B cell (primary cell): ENCODE measurements at regions of chr16 and their contacts with region 1.

Region 1: GRCh38 chr16:88569985-88570690 is at the start of gene ZC3H18:
- DNase-seq: peak; percentile 99
- ATAC-seq: peak; percentile 93
- H3K4me3 ChIP-seq: peak within 1 kb of the TSS; percentile 55 to 76 (median 73)
- H3K4me3 Mint-ChIP-seq: peak within 1 kb of the TSS; percentile 90
- H3K27ac ChIP-seq: peak within 1 kb of the TSS; percentile 52 to 87
- H3K27ac Mint-ChIP-seq: peak within 1 kb of the TSS; percentile 91
- H3K4me1 ChIP-seq: peaks cover 17 to 18% of the 10 kb centered on the region in 2 donors
- H3K4me1 Mint-ChIP-seq: peaks cover 25% of the 10 kb centered on the region
- H3K27me3 ChIP-seq: no peaks in the 10 kb centered on the region
- H3K27me3 Mint-ChIP-seq: no peaks in the 10 kb centered on the region
- CTCF ChIP-seq: no peak
- total RNA-seq, gene ZC3H18: 74.2 and 84.1 TPM in 2 replicates

Region 2: DNA sequence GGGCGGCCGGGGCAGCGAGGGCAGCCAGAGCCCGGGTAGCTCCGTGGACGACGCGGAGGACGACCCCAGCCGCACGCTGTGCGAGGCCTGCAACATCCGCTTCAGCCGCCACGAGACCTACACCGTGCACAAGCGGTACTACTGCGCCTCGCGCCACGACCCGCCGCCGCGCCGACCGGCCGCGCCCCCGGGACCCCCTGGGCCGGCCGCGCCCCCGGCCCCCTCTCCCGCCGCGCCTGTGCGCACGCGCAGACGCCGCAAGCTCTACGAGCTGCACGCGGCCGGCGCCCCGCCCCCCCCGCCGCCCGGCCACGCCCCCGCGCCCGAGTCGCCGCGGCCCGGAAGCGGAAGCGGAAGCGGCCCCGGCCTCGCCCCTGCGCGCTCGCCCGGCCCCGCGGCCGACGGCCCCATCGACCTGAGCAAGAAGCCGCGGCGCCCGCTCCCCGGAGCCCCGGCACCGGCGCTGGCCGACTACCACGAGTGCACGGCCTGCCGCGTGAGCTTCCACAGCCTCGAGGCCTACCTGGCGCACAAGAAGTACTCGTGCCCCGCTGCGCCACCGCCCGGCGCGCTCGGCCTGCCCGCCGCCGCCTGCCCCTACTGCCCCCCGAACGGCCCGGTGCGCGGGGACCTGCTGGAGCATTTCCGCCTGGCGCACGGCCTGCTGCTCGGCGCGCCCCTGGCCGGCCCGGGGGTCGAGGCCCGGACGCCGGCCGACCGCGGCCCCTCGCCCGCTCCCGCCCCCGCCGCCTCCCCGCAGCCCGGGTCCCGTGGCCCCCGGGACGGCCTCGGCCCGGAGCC is 36.0 kb before region 1 on chr16:
- CTCF ChIA-PET with region 1: no interaction called
- POLR2A ChIA-PET with region 1: interaction called, 3 read pairs
- intact Hi-C with region 1: loop called (anchors 1 kb)
- DNase-seq: peak; percentile 89
- ATAC-seq: peak; percentile 81
- H3K4me3 ChIP-seq: peak overlapping the region; percentile 18 to 79 (median 55)
- H3K4me3 Mint-ChIP-seq: peak overlapping the region; percentile 64
- H3K27ac ChIP-seq: peak overlapping the region in 1 of 2 donors; percentile 66
- H3K27ac Mint-ChIP-seq: no peak overlapping the region
- H3K4me1 ChIP-seq: peaks cover 8 to 11% of the 10 kb centered on the region in 2 donors
- H3K4me1 Mint-ChIP-seq: peaks cover 10% of the 10 kb centered on the region
- H3K27me3 ChIP-seq: peaks cover 0 to 5% (median under 1%) of the 10 kb centered on the region in 4 experiments
- H3K27me3 Mint-ChIP-seq: no peaks in the 10 kb centered on the region
- CTCF ChIP-seq: no peak